Heart right ventricle (tissue), 16 donors: ENCODE measurements at regions of chr20 and their contacts with region 1.

Region 1: DNA sequence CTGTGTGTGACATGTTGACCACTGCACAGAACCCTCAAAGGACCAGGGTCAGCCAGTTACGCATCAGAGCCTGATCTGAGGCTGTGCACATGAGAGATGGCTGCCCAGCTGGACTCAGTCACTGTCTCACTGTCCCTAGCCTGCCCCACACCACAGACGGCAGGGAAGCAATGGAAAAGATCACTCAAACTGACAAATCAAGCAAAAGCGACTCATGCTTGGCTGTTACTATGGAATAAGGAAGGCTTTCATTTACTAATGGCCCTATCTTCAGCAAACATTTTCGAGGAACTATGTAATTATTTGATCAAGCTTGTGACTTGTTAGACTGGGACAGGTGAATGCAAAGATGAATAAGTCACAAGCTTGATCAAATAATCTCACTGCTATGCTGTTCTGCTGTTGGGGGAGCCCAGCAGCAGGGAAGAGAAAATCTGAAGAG is 137.0 kb downstream of the SLC23A2 start:
- DNase-seq: no peak
- ATAC-seq: no peak
- H3K4me3 ChIP-seq: no peak overlapping the region
- H3K27ac ChIP-seq: no peak overlapping the region
- H3K4me1 ChIP-seq: no peaks in the 10 kb centered on the region
- H3K27me3 ChIP-seq: no peaks in the 10 kb centered on the region
- CTCF ChIP-seq: no peak

Region 2: GRCh38 chr20:4780245-4780644 is 84.1 kb before region 1 on chr20:
- intact Hi-C with region 1: no loop called
- DNase-seq: no peak
- ATAC-seq: no peak
- H3K4me3 ChIP-seq: no peak overlapping the region
- H3K27ac ChIP-seq: no peak overlapping the region
- H3K4me1 ChIP-seq: peaks cover 0 to 13% (median 0%) of the 10 kb centered on the region in 9 donors
- H3K27me3 ChIP-seq: no peaks in the 10 kb centered on the region
- CTCF ChIP-seq: no peak

Region 3: GRCh38 chr20:4949833-4950178 is 85.5 kb after region 1 on chr20:
- intact Hi-C with region 1: loop called in 1 of 10 experiments (anchors 5 kb)
- DNase-seq: no peak
- ATAC-seq: peak in 7 of 8 donors; percentile 43 to 65 (median 58)
- H3K4me3 ChIP-seq: no peak overlapping the region
- H3K27ac ChIP-seq: no peak overlapping the region
- H3K4me1 ChIP-seq: peaks cover 0 to 43% (median 8%) of the 10 kb centered on the region in 9 donors
- H3K27me3 ChIP-seq: no peaks in the 10 kb centered on the region
- CTCF ChIP-seq: peak in 8 of 9 donors; percentile 28 to 60 (median 52)